ENCODE measurements at regions of chrX and their contacts with region 1.

Region 1: GRCh38 chrX:70664726-70665125 is 220.1 kb downstream of the DLG3 start:
- DNase-seq: peak in 1 of 2 experiments; percentile 7
- H3K4me3 ChIP-seq: no peak overlapping the region
- H3K4me3 Mint-ChIP-seq: no peak overlapping the region
- H3K27ac Mint-ChIP-seq: no peak overlapping the region
- H3K4me1 ChIP-seq: peaks cover 14% of the 10 kb centered on the region
- H3K4me1 Mint-ChIP-seq: peaks cover 9% of the 10 kb centered on the region
- H3K27me3 ChIP-seq: no peaks in the 10 kb centered on the region
- H3K27me3 Mint-ChIP-seq: no peaks in the 10 kb centered on the region
- CTCF ChIP-seq: peak in 1 of 2 experiments; percentile 37

Region 2: DNA sequence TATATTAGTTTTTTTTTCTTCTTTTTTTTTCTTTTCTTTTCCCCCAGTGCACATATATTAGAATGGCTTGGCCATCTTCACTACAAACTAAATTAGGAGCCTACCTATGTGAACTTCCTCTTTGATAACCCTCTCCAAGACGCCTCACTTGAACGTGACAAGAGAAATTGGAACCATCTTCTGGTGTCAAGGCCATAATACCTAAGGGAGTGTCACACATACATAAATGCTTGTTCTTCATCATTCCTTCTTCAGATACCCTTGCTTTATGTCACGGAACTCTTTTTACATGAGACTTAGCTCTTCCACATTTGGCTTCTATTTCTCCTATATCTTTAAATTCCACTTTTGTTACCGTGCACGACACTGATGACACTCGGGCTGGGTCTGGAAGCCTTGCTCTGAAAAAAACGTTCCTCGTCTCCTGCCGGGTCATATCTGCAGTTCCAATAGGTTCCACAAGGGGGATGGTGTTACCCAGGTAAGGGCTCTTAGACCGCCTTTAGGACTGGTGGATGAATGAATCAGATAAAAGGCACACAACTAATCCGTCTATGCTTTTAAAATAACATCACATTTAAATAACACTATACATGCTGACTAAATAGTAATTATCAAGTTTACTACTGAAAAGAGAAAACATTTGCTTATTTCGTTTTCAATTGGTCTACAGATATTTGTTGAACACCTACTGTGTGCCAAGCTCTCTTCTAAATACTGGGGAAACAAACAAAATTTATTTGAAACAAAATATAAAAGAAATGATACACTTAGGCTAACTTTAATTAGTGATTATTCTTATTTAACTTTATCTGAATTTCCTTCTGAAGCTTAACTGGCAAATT is 467.5 kb before region 1 on chrX:
- CTCF ChIA-PET with region 1: no interaction called
- POLR2A ChIA-PET with region 1: no interaction called
- intact Hi-C with region 1: loop called (anchors 10 kb)
- DNase-seq: peak; percentile 48 to 75
- H3K4me3 ChIP-seq: no peak overlapping the region
- H3K4me3 Mint-ChIP-seq: peak overlapping the region; percentile 49
- H3K27ac Mint-ChIP-seq: no peak overlapping the region
- H3K4me1 ChIP-seq: no peaks in the 10 kb centered on the region
- H3K4me1 Mint-ChIP-seq: no peaks in the 10 kb centered on the region
- H3K27me3 ChIP-seq: no peaks in the 10 kb centered on the region
- H3K27me3 Mint-ChIP-seq: peaks cover 4% of the 10 kb centered on the region
- CTCF ChIP-seq: peak; percentile 22 to 57

Region 3: DNA sequence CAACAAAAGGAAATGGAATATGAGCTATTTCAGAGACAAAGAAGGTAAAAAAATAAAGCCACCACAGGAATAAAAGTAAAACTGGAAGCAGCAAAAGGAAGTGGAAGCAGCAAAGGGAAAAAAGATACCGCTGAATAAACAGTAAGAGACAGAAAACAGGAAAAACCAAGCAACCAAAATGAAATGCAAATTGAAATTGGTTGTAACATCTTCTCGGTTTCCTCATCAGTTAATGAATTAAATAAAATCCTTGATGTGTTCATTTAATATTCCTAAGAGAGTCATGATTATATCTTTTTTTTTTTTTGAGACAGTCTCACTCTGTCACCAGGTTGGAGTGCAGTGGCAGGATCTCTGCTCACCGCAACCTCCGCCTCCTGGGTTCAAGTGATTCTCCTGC is 87.3 kb before region 1 on chrX:
- CTCF ChIA-PET with region 1: no interaction called
- POLR2A ChIA-PET with region 1: no interaction called
- intact Hi-C with region 1: no loop called
- DNase-seq: no peak
- H3K4me3 ChIP-seq: no peak overlapping the region
- H3K4me3 Mint-ChIP-seq: no peak overlapping the region
- H3K27ac Mint-ChIP-seq: no peak overlapping the region
- H3K4me1 ChIP-seq: no peaks in the 10 kb centered on the region
- H3K4me1 Mint-ChIP-seq: no peaks in the 10 kb centered on the region
- H3K27me3 ChIP-seq: no peaks in the 10 kb centered on the region
- H3K27me3 Mint-ChIP-seq: no peaks in the 10 kb centered on the region
- CTCF ChIP-seq: no peak

Region 4: GRCh38 chrX:70908541-70908940 is 243.8 kb after region 1 on chrX and contains the start of gene TEX11:
- CTCF ChIA-PET with region 1: no interaction called
- POLR2A ChIA-PET with region 1: no interaction called
- intact Hi-C with region 1: no loop called
- DNase-seq: no peak
- H3K4me3 ChIP-seq: no peak within 1 kb of the TSS
- H3K4me3 Mint-ChIP-seq: no peak within 1 kb of the TSS
- H3K27ac Mint-ChIP-seq: no peak within 1 kb of the TSS
- H3K4me1 ChIP-seq: no peaks in the 10 kb centered on the region
- H3K4me1 Mint-ChIP-seq: no peaks in the 10 kb centered on the region
- H3K27me3 ChIP-seq: no peaks in the 10 kb centered on the region
- H3K27me3 Mint-ChIP-seq: no peaks in the 10 kb centered on the region
- CTCF ChIP-seq: no peak
- total RNA-seq, gene TEX11: 0.23 TPM in 1 of 2 replicates, not detected in the other